H1 (cell line): ENCODE measurements at regions of chr3 and their contacts with region 1.

Region 1: DNA sequence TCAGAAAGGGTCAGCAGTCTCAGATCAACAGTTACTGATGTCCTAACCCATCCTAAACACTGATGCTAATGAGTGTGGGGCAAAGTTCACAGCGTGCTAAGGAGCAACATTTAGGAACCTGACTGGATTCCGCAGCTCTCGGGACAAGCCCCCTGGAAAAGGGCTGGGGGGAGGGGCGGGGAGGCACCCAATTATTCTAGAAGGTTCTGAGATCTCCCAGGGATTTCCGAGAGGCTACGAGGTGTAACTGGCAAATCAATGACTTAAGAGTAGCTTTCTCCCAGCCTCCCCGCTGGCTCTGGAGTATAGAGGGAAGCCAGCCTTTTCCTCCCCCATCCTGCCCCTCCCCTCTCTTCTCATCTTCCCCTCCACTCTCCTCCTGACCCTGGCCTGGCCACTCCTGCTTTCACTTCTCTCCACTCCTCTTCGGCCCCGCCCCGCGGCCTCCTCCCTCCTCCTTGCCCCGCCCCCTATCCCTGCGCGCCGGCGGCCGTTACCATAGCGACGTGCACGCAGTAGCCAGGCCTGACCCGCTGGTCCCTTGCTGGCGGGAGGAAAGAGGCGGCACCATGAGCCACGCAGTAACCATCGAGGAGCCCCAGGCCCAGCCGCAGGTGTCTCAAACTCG is at the start of gene CFAP91:
- DNase-seq: peak; percentile 87 to 99
- H3K4me3 ChIP-seq: peak within 1 kb of the TSS; percentile 58 to 77 (median 70)
- H3K27ac ChIP-seq: no peak within 1 kb of the TSS
- H3K4me1 ChIP-seq: peaks cover 0 to 3% (median 1%) of the 10 kb centered on the region in 4 experiments; a peak in 3 of 7 replicates
- H3K27me3 ChIP-seq: peaks cover 0 to 5% (median 0%) of the 10 kb centered on the region in 4 experiments; a peak in 2 of 7 replicates
- CTCF ChIP-seq: no peak
- EP300 ChIP-seq: no peak
- POLR2A ChIP-seq: no peak
- RAD21 ChIP-seq: 0 out of 4 replicates have a peak, but pooled peaks of 1 of the 2 experiments have one; percentile 1
- total RNA-seq, gene CFAP91: 3.8 and 5.4 TPM in 2 replicates

Region 2: DNA sequence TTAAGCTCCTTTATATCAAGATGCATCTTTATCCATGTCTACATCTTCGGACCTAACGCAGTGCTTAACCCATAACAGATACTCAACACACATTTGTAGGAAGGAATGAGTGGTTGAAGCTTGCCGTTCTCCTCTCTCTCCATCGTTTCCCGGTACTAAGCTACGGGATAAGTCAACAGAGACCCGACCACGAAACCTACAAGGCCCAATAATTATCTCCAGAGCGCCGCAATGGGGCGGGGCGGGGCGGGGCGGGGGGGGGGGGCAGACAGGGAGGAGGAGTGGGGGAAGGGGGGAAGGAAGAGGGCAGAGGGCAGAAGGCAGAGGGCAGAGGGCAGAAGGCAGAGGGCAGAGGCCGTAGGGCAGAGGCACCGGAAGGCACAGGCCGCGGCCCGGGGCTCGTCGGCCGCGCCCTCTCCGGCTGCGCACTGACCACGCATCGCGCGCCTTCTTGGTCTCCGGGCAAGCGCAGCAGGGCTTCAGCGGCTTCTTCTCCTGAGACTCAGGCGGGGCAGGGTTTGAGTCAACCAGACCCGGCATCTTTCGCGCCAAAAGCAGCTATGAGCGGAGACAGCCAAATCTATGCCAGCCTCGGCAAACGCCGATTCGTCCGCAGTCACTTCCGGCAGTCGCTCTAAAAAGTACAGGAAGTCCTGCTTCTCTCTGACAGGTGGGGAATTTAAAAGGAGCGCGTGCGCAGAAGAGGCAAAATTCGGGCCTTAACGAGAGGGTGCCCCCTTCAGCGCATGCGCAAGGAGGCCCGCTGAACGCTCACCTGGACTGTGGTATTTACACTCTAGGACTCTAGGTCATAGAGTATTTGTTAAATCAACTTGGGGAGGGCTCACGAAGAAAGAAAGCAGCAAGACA is 25.6 kb before region 1 on chr3 and contains the start of gene COX17:
- CTCF ChIA-PET with region 1: no interaction called
- POLR2A ChIA-PET with region 1: no interaction called
- DNase-seq: peak; percentile 92 to 94
- H3K4me3 ChIP-seq: peak within 1 kb of the TSS; percentile 60 to 99 (median 82)
- H3K27ac ChIP-seq: peak within 1 kb of the TSS; percentile 77
- H3K4me1 ChIP-seq: no peaks in the 10 kb centered on the region
- H3K27me3 ChIP-seq: no peaks in the 10 kb centered on the region
- CTCF ChIP-seq: no peak
- EP300 ChIP-seq: no peak
- POLR2A ChIP-seq: peak; percentile 42 to 63; a peak in 2 of 3 replicates
- RAD21 ChIP-seq: no peak
- total RNA-seq, gene COX17: 43.0 and 45.5 TPM in 2 replicates

Region 3: GRCh38 chr3:119690043-119690656 is 12.5 kb before region 1 on chr3:
- CTCF ChIA-PET with region 1: interaction called, 15 read pairs
- POLR2A ChIA-PET with region 1: interaction called, 3 read pairs
- DNase-seq: no peak
- H3K4me3 ChIP-seq: no peak overlapping the region
- H3K27ac ChIP-seq: no peak overlapping the region
- H3K4me1 ChIP-seq: no peaks in the 10 kb centered on the region
- H3K27me3 ChIP-seq: peaks cover 0 to 2% (median 0%) of the 10 kb centered on the region in 4 experiments; a peak in 2 of 7 replicates
- CTCF ChIP-seq: peak in 2 of 3 experiments; percentile 27 to 45; a peak in 2 of 4 replicates
- EP300 ChIP-seq: no peak
- POLR2A ChIP-seq: no peak
- RAD21 ChIP-seq: peak; percentile 23 to 25; a peak in 2 of 4 replicates

Region 4: GRCh38 chr3:119831022-119831421 is 128.4 kb after region 1 on chr3:
- CTCF ChIA-PET with region 1: no interaction called
- POLR2A ChIA-PET with region 1: no interaction called
- DNase-seq: no peak
- H3K4me3 ChIP-seq: no peak overlapping the region
- H3K27ac ChIP-seq: no peak overlapping the region
- H3K4me1 ChIP-seq: peaks cover 0 to 3% (median 1%) of the 10 kb centered on the region in 4 experiments; a peak in 2 of 7 replicates
- H3K27me3 ChIP-seq: no peaks in the 10 kb centered on the region
- CTCF ChIP-seq: peak in 2 of 3 experiments; percentile 9 to 45; a peak in 2 of 4 replicates
- EP300 ChIP-seq: no peak
- POLR2A ChIP-seq: no peak
- RAD21 ChIP-seq: peak in 1 of 2 experiments; percentile 18; a peak in 1 of 4 replicates